Activated B cell treated with CpG ODN at 0.5 μM for 24 hours (primary cell): ENCODE measurements at regions of chr17 and their contacts with region 1.

Region 1: GRCh38 chr17:50055426-50056230 is at the start of gene ITGA3:
- DNase-seq: peak; percentile 38
- ATAC-seq: peak; percentile 64
- H3K4me3 Mint-ChIP-seq: peak within 1 kb of the TSS; percentile 91
- H3K27ac Mint-ChIP-seq: peak within 1 kb of the TSS; percentile 59
- H3K4me1 Mint-ChIP-seq: peaks cover 29% of the 10 kb centered on the region
- H3K27me3 Mint-ChIP-seq: peaks cover 21% of the 10 kb centered on the region
- CTCF ChIP-seq: no peak
- total RNA-seq, gene ITGA3: 7.7 and 9.8 TPM in 2 replicates

Region 2: GRCh38 chr17:50026901-50027630 is 28.6 kb before region 1 on chr17:
- CTCF ChIA-PET with region 1: interaction called, 3 read pairs
- POLR2A ChIA-PET with region 1: no interaction called
- intact Hi-C with region 1: loop called (anchors 1 kb)
- DNase-seq: peak; percentile 72
- ATAC-seq: peak; percentile 82
- H3K4me3 Mint-ChIP-seq: peak overlapping the region; percentile 11
- H3K27ac Mint-ChIP-seq: no peak overlapping the region
- H3K4me1 Mint-ChIP-seq: peaks cover 9% of the 10 kb centered on the region
- H3K27me3 Mint-ChIP-seq: peaks cover 25% of the 10 kb centered on the region
- CTCF ChIP-seq: peak; percentile 86

Region 3: GRCh38 chr17:50114849-50115357 is 59.3 kb after region 1 on chr17:
- CTCF ChIA-PET with region 1: no interaction called
- POLR2A ChIA-PET with region 1: no interaction called
- intact Hi-C with region 1: no loop called
- DNase-seq: no peak
- ATAC-seq: peak; percentile 18
- H3K4me3 Mint-ChIP-seq: peak overlapping the region; percentile 28
- H3K27ac Mint-ChIP-seq: no peak overlapping the region
- H3K4me1 Mint-ChIP-seq: peaks cover 14% of the 10 kb centered on the region
- H3K27me3 Mint-ChIP-seq: peaks cover 36% of the 10 kb centered on the region
- CTCF ChIP-seq: no peak